Sigmoid colon (tissue), 7 donors: ENCODE measurements at regions of chr2 and their contacts with region 1.

Region 1: GRCh38 chr2:217934321-217935131 is 68.3 kb downstream of the TNS1 start:
- DNase-seq: peak; percentile 93
- H3K4me3 ChIP-seq: peak overlapping the region; percentile 12 to 80 (median 68)
- H3K27ac ChIP-seq: peak overlapping the region; percentile 94 to 98 (median 98)
- H3K4me1 ChIP-seq: peaks cover 0 to 100% (median 96%) of the 10 kb centered on the region in 4 donors
- H3K27me3 ChIP-seq: no peaks in the 10 kb centered on the region
- CTCF ChIP-seq: no peak
- EP300 ChIP-seq: peak in 1 of 4 donors; percentile 30
- POLR2A ChIP-seq: no peak

Region 2: GRCh38 chr2:217920879-217921603 is 13.5 kb before region 1 on chr2:
- intact Hi-C with region 1: loop called (anchors 1 kb)
- DNase-seq: peak; percentile 91
- H3K4me3 ChIP-seq: peak overlapping the region in 3 of 4 donors; percentile 13 to 34 (median 31)
- H3K27ac ChIP-seq: peak overlapping the region; percentile 94 to 98 (median 98)
- H3K4me1 ChIP-seq: peaks cover 0 to 100% (median 100%) of the 10 kb centered on the region in 4 donors
- H3K27me3 ChIP-seq: no peaks in the 10 kb centered on the region
- CTCF ChIP-seq: no peak
- EP300 ChIP-seq: peak in 3 of 4 donors; percentile 22 to 90 (median 29)
- POLR2A ChIP-seq: no peak

Region 3: GRCh38 chr2:217972490-217972889 is 38.0 kb after region 1 on chr2:
- intact Hi-C with region 1: loop called (anchors 5 kb)
- DNase-seq: peak; percentile 80
- H3K4me3 ChIP-seq: no peak overlapping the region
- H3K27ac ChIP-seq: peak overlapping the region; percentile 92 to 98 (median 94)
- H3K4me1 ChIP-seq: peaks cover 0 to 83% (median 75%) of the 10 kb centered on the region in 4 donors
- H3K27me3 ChIP-seq: no peaks in the 10 kb centered on the region
- CTCF ChIP-seq: no peak
- EP300 ChIP-seq: no peak
- POLR2A ChIP-seq: no peak